SK-N-SH (cell line): ENCODE measurements at regions of chr5 and their contacts with region 1.

Region 1: DNA sequence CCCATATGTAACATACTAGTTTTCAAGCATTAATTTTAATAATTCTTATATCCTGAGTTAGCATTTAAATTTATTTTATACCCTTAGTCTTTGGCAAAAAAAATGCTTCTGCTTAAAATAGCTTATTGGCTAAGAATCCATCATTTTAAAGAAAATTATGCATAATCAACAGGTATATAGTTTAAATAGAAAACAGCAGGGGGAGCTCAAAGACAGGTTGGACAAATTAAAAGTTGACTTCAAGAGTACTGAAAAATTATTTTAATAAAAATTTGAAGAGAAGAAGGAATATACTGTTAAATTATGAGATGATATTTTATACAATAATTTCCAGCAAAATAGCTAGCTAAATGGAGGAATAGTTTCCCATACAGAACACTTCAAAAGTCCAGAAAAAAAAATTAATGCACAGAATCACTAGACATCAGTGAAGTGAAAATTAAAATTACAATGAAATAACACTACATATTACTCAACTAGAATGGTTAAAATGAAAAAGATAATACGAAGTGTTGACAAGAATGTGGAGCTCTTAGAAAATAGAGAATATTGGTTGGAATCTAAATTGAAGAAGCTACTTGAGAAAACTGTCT is 387.1 kb downstream of the PDE4D start:
- DNase-seq: no peak
- H3K4me3 ChIP-seq: no peak overlapping the region
- H3K27ac ChIP-seq: no peak overlapping the region
- H3K4me1 ChIP-seq: no peaks in the 10 kb centered on the region
- H3K27me3 ChIP-seq: no peaks in the 10 kb centered on the region
- CTCF ChIP-seq: peak; percentile 77
- EP300 ChIP-seq: no peak
- RAD21 ChIP-seq: peak; percentile 76

Region 2: GRCh38 chr5:58800356-58800755 is 706.0 kb before region 1 on chr5:
- CTCF ChIA-PET with region 1: no interaction called
- POLR2A ChIA-PET with region 1: no interaction called
- DNase-seq: no peak
- H3K4me3 ChIP-seq: no peak overlapping the region
- H3K27ac ChIP-seq: no peak overlapping the region
- H3K4me1 ChIP-seq: peaks cover 0 to 2% of the 10 kb centered on the region in 2 experiments; a peak in 1 of 4 replicates
- H3K27me3 ChIP-seq: no peaks in the 10 kb centered on the region
- CTCF ChIP-seq: no peak
- EP300 ChIP-seq: no peak
- RAD21 ChIP-seq: no peak

Region 3: GRCh38 chr5:59485629-59486439 is 20.5 kb before region 1 on chr5:
- CTCF ChIA-PET with region 1: interaction called, 20 read pairs
- POLR2A ChIA-PET with region 1: no interaction called
- DNase-seq: peak; percentile 28
- H3K4me3 ChIP-seq: no peak overlapping the region
- H3K27ac ChIP-seq: peak overlapping the region; percentile 37 to 98
- H3K4me1 ChIP-seq: peaks cover 25 to 48% of the 10 kb centered on the region in 2 experiments
- H3K27me3 ChIP-seq: no peaks in the 10 kb centered on the region
- CTCF ChIP-seq: no peak
- EP300 ChIP-seq: peak; percentile 33 to 98; a peak in 2 of 4 replicates
- RAD21 ChIP-seq: peak; percentile 36; the same call in 1 of the 2 replicates

Region 4: GRCh38 chr5:59660737-59661136 is 154.4 kb after region 1 on chr5:
- CTCF ChIA-PET with region 1: interaction called, 51 read pairs
- POLR2A ChIA-PET with region 1: no interaction called
- DNase-seq: peak; percentile 21
- H3K4me3 ChIP-seq: no peak overlapping the region
- H3K27ac ChIP-seq: peak overlapping the region in 1 of 2 experiments; percentile 64; a peak in 2 of 4 replicates
- H3K4me1 ChIP-seq: peaks cover 4 to 22% of the 10 kb centered on the region in 2 experiments; a peak in 3 of 4 replicates
- H3K27me3 ChIP-seq: no peaks in the 10 kb centered on the region
- CTCF ChIP-seq: peak; percentile 67
- EP300 ChIP-seq: no peak
- RAD21 ChIP-seq: peak; percentile 77

Region 5: DNA sequence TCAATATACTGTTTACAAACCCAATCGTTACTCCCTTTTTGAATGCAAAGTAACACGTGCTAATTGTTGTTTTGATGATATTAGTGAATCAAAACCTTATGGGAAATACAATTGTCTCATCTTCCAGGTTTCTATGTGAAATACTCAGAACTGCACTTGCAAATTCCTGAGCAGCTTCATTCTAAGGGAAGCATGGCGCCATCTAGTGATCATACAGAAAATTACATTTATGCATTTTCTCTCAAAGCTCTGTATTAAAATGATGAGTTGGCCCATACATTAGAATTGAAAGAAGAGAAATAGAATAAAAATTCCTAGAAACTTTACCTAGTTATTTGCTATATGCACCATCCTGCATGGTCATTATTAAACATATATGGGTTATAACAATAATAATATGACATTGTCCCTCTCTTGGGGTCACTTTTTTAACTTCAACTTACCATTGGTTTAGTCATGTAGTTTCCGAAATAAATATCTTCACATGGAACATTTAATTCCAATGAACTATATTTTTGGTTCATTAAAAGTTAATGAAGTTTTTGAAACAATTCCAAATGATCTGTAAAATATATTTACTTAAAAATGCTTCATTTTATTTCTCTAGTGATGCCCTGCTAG is 167.2 kb after region 1 on chr5:
- CTCF ChIA-PET with region 1: interaction called, 28 read pairs
- POLR2A ChIA-PET with region 1: no interaction called
- DNase-seq: peak; percentile 24
- H3K4me3 ChIP-seq: no peak overlapping the region; a peak in 1 of 4 replicates
- H3K27ac ChIP-seq: no peak overlapping the region
- H3K4me1 ChIP-seq: peaks cover 2 to 4% of the 10 kb centered on the region in 2 experiments; a peak in 3 of 4 replicates
- H3K27me3 ChIP-seq: no peaks in the 10 kb centered on the region
- CTCF ChIP-seq: peak; percentile 89
- EP300 ChIP-seq: no peak
- RAD21 ChIP-seq: peak; percentile 90

Region 6: DNA sequence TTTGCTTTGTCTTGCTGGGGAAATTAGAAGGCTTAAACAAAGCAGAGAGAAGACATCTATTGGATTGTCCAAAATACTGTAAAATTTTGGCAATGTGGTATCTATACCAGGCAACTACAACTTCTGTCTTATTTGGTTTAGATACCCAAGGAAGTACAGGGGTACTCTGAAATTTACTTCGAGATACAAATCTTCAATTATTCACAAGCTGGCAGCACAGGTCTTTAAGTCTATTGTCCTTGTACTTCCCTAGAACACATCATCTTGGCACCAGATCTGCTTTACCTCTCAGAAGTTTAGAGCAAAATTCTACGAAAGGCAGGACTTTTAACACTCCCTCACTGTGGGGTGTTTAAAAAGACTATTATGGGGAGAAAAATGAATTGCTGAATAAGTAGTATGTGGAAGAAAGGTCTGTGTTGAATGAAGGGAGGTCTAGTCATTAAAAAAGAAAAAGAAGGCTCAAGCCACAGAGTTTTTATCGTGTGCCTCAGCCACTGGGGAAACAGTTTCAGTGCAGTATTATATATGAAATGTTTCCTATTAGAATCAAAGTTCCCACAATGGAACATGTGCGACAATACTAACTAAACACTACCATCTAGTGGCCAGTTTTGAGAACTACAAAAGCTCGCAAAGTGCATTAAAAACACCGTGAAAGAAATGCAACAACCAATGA is 293.4 kb after region 1 on chr5:
- CTCF ChIA-PET with region 1: interaction called, 23 read pairs
- POLR2A ChIA-PET with region 1: no interaction called
- DNase-seq: peak; percentile 37
- H3K4me3 ChIP-seq: no peak overlapping the region; a peak in 1 of 4 replicates
- H3K27ac ChIP-seq: peak overlapping the region; percentile 46 to 74; a peak in 3 of 4 replicates
- H3K4me1 ChIP-seq: peaks cover 10 to 15% of the 10 kb centered on the region in 2 experiments
- H3K27me3 ChIP-seq: no peaks in the 10 kb centered on the region
- CTCF ChIP-seq: peak; percentile 81
- EP300 ChIP-seq: no peak
- RAD21 ChIP-seq: peak; percentile 97